ENCODE measurements at regions of chr20 and their contacts with region 1.

Region 1: DNA sequence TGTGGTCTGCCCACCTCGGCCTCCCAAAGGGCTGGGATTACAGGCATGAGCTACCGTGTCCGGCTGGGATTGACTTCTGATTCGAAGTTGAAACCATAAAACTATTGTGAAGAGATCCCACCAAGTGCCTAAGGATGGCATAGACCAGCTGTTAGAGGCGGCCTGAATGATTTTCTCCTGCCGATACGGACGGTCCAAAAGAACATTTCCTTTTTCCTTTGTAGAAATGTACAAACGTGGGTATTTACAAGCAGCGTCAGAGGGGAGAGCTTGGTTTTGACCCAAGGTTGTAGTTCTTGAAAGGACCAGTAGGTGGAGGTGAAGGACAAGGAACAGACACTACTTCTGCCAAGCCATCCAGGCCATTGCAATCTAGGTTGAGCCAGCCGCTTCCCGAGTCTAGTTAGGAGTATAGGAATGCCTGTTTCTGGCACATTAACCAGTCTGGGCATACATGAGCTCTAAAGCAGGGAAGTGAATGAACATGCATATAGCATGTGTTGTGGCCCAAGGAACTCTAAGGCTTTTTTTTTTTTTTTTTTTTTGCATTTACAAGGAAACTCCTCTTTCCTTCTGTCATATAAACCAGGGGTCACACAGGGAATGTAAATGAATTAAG is 29.1 kb downstream of the MOCS3 start:
- ATAC-seq: peak; percentile 81 to 98 (median 93)
- H3K4me3 ChIP-seq: no peak overlapping the region
- H3K27ac ChIP-seq: no peak overlapping the region
- H3K4me1 ChIP-seq: peaks cover 3 to 4% of the 10 kb centered on the region in 2 donors

Region 2: GRCh38 chr20:50904067-50904570 is 83.6 kb before region 1 on chr20:
- in situ Hi-C with region 1: no loop called
- ATAC-seq: no peak
- H3K4me3 ChIP-seq: no peak overlapping the region
- H3K27ac ChIP-seq: no peak overlapping the region
- H3K4me1 ChIP-seq: peaks cover 0 to 6% of the 10 kb centered on the region in 2 donors

Region 3: GRCh38 chr20:51306503-51307358 is 319.0 kb after region 1 on chr20:
- in situ Hi-C with region 1: loop called (anchors 10 to 25 kb)
- ATAC-seq: peak; percentile 97 to 100 (median 100)
- H3K4me3 ChIP-seq: no peak overlapping the region
- H3K27ac ChIP-seq: no peak overlapping the region
- H3K4me1 ChIP-seq: peaks cover 6 to 16% of the 10 kb centered on the region in 2 donors

Region 4: DNA sequence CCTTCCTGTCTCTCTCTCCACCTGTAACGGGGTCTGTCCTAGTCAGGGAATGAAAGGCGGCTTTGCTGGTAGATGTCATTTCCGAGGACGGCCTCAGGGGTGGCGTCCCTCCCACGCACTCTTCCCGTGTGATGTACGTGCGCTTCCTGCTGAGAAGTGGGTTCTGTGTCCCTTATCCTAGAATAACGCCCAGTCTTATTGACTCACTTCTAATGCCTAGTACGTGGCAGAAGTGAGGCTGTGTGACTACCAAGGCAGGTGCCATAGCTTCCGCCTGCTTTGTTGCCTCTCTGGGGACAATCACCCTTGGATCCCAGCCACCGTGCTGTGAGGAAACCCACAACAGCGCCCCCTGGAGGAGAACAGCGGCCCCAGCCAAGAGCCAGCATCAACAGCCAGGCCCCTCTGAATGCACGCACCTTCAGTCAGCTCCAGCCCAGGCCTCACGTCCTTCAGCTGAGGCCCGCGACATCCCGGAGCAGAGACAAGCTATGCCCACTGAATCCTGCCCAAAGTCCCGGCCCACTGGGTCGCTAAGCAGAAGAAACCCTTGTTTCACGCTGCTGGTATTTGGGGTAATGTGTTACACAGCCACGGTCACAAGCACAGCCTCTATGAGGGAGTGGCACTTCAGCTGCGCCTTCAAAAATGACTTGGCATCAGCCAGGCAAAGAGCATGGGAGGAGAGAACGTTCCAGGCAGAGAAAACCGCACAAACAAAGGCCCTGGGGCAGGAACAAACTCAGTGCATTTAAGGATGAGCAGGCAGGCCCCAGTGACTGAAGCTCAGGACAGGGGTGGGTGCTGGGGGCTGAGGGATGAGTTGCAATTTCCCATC is 330.6 kb after region 1 on chr20:
- in situ Hi-C with region 1: loop called in 4 of 9 experiments (anchors 10 to 25 kb)
- ATAC-seq: peak; percentile 34 to 72 (median 42)
- H3K4me3 ChIP-seq: no peak overlapping the region
- H3K27ac ChIP-seq: peak overlapping the region; percentile 32 to 33
- H3K4me1 ChIP-seq: peaks cover 9 to 24% of the 10 kb centered on the region in 2 donors

Region 5: GRCh38 chr20:51595058-51595532 is 607.4 kb after region 1 on chr20:
- in situ Hi-C with region 1: loop called in 6 of 9 experiments (anchors 25 kb)
- ATAC-seq: peak; percentile 81 to 98 (median 92)
- H3K4me3 ChIP-seq: no peak overlapping the region
- H3K27ac ChIP-seq: no peak overlapping the region
- H3K4me1 ChIP-seq: no peaks in the 10 kb centered on the region

Region 6: DNA sequence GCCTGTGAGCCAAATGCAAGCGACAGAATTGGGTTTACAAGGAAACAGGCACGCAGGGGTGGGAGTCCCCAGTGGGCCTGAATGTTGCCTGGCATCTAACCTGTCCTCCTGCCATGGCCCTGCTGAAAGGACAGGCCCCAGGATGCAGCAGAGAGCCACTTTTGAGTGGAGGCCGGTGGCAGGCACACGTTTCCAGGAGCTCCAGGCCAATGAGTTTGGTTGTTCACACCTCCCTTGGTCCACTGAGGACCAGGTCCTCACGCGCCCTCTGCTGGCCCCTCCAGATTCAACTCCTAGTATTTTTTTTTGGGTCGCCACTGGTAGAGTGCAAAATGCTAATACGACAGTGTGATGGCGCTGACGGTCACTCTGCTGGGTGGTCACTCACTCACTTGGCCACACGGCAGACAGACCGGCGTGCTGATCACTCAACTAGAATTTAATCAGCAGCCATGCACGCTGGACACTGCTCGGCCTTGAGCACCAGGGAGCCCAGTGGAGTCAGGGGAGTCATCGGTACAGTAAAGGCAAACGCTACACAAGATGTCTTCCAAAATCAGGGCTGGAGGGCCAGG is 636.5 kb after region 1 on chr20:
- in situ Hi-C with region 1: loop called in 3 of 9 experiments (anchors 25 kb)
- ATAC-seq: peak; percentile 29 to 86 (median 65)
- H3K4me3 ChIP-seq: no peak overlapping the region
- H3K27ac ChIP-seq: no peak overlapping the region
- H3K4me1 ChIP-seq: no peaks in the 10 kb centered on the region

Region 7: DNA sequence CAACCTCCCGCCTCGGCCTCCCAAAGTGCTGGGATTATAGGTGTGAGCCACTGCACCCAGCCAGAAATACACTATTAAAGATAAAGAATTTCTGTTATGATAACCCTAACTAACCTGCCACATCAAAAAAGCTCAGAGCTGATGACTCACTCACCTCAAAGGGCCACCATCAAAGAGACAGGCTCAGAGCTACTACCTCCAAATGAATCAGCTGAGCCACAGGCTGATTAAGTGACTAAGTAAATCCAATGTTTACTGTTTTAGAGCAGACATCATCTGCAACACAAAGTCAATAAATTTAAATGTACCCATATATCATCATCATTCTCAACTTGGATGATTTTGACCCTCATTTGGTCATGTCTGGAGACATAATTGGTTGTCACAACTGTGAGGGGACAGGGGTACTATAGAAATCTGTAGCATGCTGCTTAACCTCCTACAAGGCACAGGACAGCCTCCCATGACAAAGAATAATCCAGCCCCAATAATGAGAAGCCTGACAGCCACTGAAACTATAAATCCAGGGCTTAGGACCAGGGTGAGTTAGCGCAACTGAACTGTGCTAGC is 674.0 kb after region 1 on chr20:
- in situ Hi-C with region 1: no loop called
- ATAC-seq: peak in 1 of 8 experiments; percentile 51
- H3K4me3 ChIP-seq: no peak overlapping the region
- H3K27ac ChIP-seq: no peak overlapping the region
- H3K4me1 ChIP-seq: no peaks in the 10 kb centered on the region